B cell (primary cell): ENCODE measurements at regions of chr16 and their contacts with region 1.

Region 1: DNA sequence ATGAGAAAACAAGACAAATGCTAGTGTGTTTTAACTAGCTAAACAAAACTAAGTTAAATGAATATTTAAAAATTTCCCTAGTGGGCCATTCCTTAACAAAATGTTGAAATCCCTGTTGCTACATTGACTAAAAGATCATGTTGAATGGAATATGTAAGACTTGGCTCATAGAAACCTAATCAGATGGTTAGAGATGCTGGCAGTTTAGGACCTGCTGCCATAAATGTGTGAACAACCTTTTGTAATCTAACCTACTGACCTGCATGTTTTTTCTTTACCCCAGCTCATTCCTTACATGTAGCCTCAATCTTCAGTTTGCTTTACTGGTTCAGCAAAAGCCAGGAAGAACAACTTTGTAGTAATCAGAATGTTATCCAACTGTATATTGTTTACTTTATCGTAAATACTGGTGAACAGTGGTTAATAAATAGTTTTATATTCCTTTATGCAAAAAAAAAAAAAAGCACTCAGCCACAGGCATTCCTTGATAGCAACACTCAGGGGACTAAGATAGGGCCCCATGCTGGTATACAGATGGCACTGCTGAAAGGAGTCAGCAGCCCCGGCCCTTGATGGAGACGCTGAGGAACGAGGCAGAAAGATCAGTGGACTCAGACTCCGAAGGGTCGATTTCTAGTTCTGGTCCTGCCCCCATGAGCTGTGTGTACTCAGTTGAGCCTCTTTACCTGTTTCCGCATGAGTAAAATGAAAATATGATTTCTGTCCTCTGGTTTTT is 78.2 kb downstream of the MARF1 start:
- DNase-seq: no peak
- ATAC-seq: no peak
- H3K4me3 ChIP-seq: no peak overlapping the region
- H3K4me3 Mint-ChIP-seq: no peak overlapping the region
- H3K27ac ChIP-seq: no peak overlapping the region
- H3K27ac Mint-ChIP-seq: no peak overlapping the region
- H3K4me1 ChIP-seq: no peaks in the 10 kb centered on the region
- H3K4me1 Mint-ChIP-seq: peaks cover 4% of the 10 kb centered on the region
- H3K27me3 ChIP-seq: no peaks in the 10 kb centered on the region
- H3K27me3 Mint-ChIP-seq: no peaks in the 10 kb centered on the region
- CTCF ChIP-seq: no peak

Region 2: DNA sequence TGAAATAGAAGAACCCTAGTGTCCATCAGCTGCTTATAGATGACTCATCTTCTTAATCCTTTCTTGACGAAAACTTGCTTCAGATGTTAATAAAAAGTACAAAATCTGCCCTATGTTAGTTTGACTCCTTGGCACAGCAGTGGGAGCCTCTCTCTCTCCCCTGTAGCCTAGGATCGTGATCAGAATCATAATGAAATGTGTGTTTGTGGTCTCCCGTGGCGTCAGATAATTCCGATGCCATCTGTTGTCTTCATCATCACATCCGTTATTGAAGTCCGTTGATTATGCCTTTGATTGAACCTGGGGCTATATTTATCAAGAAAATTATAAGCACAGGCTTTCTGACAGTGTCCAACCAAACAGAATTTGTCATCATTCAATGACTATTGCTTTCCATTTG is 27.9 kb before region 1 on chr16:
- CTCF ChIA-PET with region 1: no interaction called
- POLR2A ChIA-PET with region 1: no interaction called
- intact Hi-C with region 1: loop called (anchors 1 kb)
- DNase-seq: no peak
- ATAC-seq: no peak
- H3K4me3 ChIP-seq: no peak overlapping the region
- H3K4me3 Mint-ChIP-seq: no peak overlapping the region
- H3K27ac ChIP-seq: no peak overlapping the region
- H3K27ac Mint-ChIP-seq: no peak overlapping the region
- H3K4me1 ChIP-seq: no peaks in the 10 kb centered on the region
- H3K4me1 Mint-ChIP-seq: no peaks in the 10 kb centered on the region
- H3K27me3 ChIP-seq: no peaks in the 10 kb centered on the region
- H3K27me3 Mint-ChIP-seq: no peaks in the 10 kb centered on the region
- CTCF ChIP-seq: no peak

Region 3: GRCh38 chr16:15585956-15586355 is 21.2 kb after region 1 on chr16:
- CTCF ChIA-PET with region 1: no interaction called
- POLR2A ChIA-PET with region 1: interaction called, 11 read pairs
- intact Hi-C with region 1: no loop called
- DNase-seq: no peak
- ATAC-seq: no peak
- H3K4me3 ChIP-seq: no peak overlapping the region
- H3K4me3 Mint-ChIP-seq: no peak overlapping the region
- H3K27ac ChIP-seq: no peak overlapping the region
- H3K27ac Mint-ChIP-seq: peak overlapping the region; percentile 15
- H3K4me1 ChIP-seq: peaks cover 7 to 9% of the 10 kb centered on the region in 2 donors
- H3K4me1 Mint-ChIP-seq: peaks cover 16% of the 10 kb centered on the region
- H3K27me3 ChIP-seq: no peaks in the 10 kb centered on the region
- H3K27me3 Mint-ChIP-seq: no peaks in the 10 kb centered on the region
- CTCF ChIP-seq: no peak